Cardiac septum (tissue), 1 donor: ENCODE measurements at regions of chr3 and their contacts with region 1.

Region 1: GRCh38 chr3:66261355-66261754 is 40.6 kb downstream of the SLC25A26 start:
- DNase-seq: no peak

Region 2: DNA sequence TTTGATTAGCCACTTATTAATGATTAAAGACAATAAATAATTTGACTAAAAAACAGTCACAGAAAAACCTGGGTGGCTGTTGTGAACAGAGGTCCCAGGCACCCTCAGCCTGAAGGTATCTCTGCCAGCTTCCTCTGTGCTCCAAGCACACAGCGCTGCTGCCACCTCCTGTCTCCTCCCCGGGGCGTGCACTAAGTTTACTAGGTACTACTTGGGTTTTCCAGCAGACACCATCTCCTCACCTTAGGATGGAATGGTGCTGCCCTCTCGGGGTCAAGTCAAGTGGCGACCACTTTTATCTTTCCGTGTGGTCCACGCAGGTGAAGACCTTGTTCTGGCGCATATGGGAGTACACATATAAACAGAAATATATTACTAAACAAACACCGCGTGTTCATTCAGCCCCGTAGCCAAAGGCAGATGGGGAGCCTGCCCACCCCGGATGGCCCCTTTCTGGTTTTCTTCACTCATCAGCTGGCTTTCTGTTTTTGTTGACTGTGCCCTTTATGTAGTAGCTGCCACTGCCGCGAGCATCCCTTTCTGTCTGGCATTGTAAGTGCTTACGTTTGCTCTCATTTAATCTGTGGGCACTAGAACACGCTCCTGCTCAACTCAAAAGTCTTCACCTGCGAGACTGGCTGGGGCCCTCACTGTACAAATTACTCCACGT is 111.5 kb after region 1 on chr3:
- intact Hi-C with region 1: loop called (anchors 5 kb)
- DNase-seq: no peak